SK-N-SH (cell line): ENCODE measurements at regions of chr1 and their contacts with region 1.

Region 1: DNA sequence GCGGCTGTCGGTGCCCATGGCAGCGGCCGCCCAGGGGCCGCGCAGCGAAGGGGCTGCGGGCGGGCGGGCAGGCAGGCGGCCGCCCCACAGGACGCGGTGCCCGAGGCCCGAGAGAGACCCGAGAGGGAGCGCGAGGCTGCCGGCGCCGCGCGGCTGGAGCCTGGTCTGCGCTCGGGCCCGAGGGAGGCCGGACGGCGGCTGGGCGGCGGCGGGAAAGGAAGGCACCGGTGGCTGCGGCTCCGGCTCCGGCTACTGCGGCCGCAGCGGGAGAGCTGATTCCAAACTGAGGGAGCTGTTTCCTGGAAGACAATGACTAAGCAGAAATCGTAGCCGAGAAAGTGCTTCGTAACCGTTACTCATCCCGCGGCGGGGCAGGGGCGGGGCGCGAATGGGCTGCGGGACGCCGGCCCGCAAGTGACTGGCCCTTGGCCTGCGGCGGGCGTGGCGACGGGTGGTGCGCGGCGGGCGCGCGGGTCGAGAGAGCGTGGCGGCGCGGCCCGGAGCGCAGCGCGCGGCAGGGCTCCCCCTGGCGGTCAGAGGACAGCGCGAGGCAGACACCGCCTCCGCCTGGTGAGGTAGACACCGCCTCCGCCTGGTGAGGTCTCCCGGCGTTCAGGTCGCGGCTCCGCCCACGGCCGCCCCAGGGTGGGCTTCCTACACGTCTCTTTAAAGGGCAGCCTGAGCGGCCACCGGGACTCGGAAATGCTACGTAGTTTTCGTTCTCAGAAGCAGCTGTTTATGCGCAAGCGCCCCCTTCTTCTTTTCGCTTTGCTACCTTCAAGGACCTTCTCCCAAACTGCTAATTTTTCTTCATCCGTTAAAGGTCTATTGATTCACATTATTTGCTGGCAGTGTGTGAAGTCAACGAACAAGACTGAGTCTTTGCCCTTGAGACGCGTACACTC is at the start of gene GCLM:
- DNase-seq: peak; percentile 96
- H3K4me3 ChIP-seq: peak within 1 kb of the TSS; percentile 92 to 93
- H3K27ac ChIP-seq: peak within 1 kb of the TSS; percentile 57 to 83; a peak in 3 of 4 replicates
- H3K4me1 ChIP-seq: peaks cover 10 to 16% of the 10 kb centered on the region in 2 experiments; a peak in 3 of 4 replicates
- H3K27me3 ChIP-seq: no peaks in the 10 kb centered on the region
- CTCF ChIP-seq: peak; percentile 77
- EP300 ChIP-seq: peak in 1 of 2 experiments; percentile 43; a peak in 1 of 4 replicates
- RAD21 ChIP-seq: peak; percentile 53
- polyA plus RNA-seq, gene GCLM: 9.4 and 12.3 TPM in 2 replicates

Region 2: DNA sequence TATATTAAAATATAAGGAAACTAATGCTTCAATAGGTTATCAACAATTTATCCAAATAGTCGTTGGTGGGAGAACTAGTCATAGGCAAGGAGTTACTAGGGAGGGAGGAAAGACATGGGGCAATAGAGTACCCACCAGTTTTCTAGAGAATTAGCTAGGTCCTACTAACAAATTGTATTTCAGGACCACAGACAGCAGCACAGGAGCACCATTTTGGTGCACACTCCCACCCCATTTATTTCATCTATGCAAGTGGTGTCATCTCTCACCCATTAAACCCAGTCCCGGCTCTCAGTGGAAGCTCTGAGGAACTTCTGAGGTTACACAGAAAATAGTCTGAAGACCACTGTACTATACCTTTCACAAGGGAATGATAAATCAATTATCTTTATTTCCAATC is 138.8 kb before region 1 on chr1:
- CTCF ChIA-PET with region 1: no interaction called
- POLR2A ChIA-PET with region 1: no interaction called
- DNase-seq: no peak
- H3K4me3 ChIP-seq: no peak overlapping the region
- H3K27ac ChIP-seq: no peak overlapping the region
- H3K4me1 ChIP-seq: peaks cover 15 to 26% of the 10 kb centered on the region in 2 experiments; a peak in 1 of 4 replicates
- H3K27me3 ChIP-seq: no peaks in the 10 kb centered on the region
- CTCF ChIP-seq: no peak
- EP300 ChIP-seq: no peak
- RAD21 ChIP-seq: no peak

Region 3: GRCh38 chr1:93878889-93879586 is 30.4 kb before region 1 on chr1 and contains the start of gene DNTTIP2:
- CTCF ChIA-PET with region 1: interaction called, 14 read pairs
- POLR2A ChIA-PET with region 1: interaction called, 7 read pairs
- DNase-seq: peak; percentile 91
- H3K4me3 ChIP-seq: peak within 1 kb of the TSS; percentile 96 to 98
- H3K27ac ChIP-seq: peak within 1 kb of the TSS; percentile 89 to 95
- H3K4me1 ChIP-seq: peaks cover 5 to 11% of the 10 kb centered on the region in 2 experiments; a peak in 3 of 4 replicates
- H3K27me3 ChIP-seq: no peaks in the 10 kb centered on the region
- CTCF ChIP-seq: no peak
- EP300 ChIP-seq: no peak
- RAD21 ChIP-seq: no peak
- polyA plus RNA-seq, gene DNTTIP2: 9.6 and 13.1 TPM in 2 replicates

Region 4: DNA sequence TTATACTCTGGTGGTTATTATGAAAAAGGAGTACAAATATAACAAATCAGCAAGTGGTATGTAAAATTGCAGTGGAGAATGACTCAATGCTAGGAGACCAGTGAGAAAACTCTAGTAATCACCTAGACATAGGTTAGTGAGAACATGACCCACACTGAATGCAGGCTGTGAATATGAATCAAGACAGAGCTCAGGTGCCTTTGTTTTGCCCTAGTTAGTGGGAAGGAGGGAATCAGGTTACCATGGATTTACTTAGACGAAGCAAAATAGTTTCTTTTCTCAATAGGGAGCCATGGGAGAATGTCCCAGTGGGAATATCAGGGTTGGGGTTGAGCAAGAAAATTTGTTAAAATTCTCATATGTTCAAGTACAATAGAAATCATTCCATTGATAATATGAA is 10.4 kb after region 1 on chr1:
- CTCF ChIA-PET with region 1: interaction called, 12 read pairs
- POLR2A ChIA-PET with region 1: no interaction called
- DNase-seq: no peak
- H3K4me3 ChIP-seq: no peak overlapping the region
- H3K27ac ChIP-seq: no peak overlapping the region
- H3K4me1 ChIP-seq: no peaks in the 10 kb centered on the region
- H3K27me3 ChIP-seq: no peaks in the 10 kb centered on the region
- CTCF ChIP-seq: no peak
- EP300 ChIP-seq: no peak
- RAD21 ChIP-seq: no peak

Region 5: DNA sequence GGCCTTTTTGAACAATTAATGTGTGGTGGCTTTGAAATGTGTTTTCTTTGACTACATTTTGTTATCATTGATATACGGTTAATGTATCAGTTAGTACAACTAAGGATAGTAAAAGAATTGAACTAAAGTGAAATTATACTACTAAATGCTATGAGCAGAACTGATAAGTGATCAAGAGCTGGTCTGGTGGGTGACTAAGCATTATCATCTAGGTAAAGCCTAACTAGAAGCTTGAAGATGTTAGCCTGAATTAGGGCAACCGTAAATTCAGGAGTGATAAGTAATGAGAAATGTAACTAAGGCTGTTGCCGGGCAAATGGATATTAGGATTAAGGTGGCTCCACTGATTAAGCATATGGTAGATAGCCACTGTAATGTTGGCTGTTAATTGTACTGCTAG is 15.8 kb after region 1 on chr1:
- CTCF ChIA-PET with region 1: interaction called, 12 read pairs
- POLR2A ChIA-PET with region 1: no interaction called
- DNase-seq: no peak
- H3K4me3 ChIP-seq: no peak overlapping the region
- H3K27ac ChIP-seq: no peak overlapping the region
- H3K4me1 ChIP-seq: no peaks in the 10 kb centered on the region
- H3K27me3 ChIP-seq: no peaks in the 10 kb centered on the region
- CTCF ChIP-seq: no peak
- EP300 ChIP-seq: no peak
- RAD21 ChIP-seq: no peak

Region 6: GRCh38 chr1:93967306-93967705 is 57.9 kb after region 1 on chr1:
- CTCF ChIA-PET with region 1: no interaction called
- POLR2A ChIA-PET with region 1: no interaction called
- DNase-seq: no peak
- H3K4me3 ChIP-seq: no peak overlapping the region
- H3K27ac ChIP-seq: no peak overlapping the region
- H3K4me1 ChIP-seq: no peaks in the 10 kb centered on the region; a peak in 1 of 4 replicates
- H3K27me3 ChIP-seq: no peaks in the 10 kb centered on the region
- CTCF ChIP-seq: no peak
- EP300 ChIP-seq: no peak
- RAD21 ChIP-seq: no peak